ENCODE measurements at regions of chr12 and their contacts with region 1.

Region 1: DNA sequence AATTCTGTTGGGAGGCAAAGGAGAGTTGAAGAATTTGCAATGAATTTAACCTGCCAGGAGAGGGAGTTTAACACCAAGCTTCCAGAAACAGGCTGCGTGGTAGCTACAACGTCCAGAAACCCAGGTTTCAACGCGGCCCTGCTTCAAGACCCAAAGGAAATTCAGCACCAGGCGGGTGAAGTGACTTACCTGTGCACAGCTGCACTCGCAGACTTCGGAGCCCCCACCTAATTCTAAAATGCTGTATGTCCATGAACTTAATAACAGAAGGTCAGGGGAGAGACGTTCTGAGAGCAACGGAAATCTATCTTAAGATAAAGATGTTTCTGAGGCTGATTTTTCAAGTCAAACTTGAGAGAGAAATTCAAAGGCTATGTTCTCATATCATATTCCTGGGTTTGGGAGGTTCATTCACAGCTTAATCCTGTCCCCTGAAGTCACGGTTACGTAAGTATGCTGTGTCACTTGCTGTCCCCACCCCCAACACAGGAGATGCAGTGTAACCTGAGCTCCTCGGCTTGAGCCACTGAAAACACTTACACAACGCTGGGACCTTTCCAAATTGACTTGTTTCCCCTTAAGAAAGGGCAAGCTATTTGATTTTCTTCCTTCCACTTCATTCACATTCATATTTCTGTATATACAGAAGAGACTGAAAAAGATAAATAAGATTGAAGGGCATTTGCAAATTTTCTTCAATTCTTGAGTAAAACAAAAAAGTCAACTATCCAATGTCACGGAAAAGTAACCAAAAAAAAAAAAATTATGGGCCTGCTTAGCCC is 22.7 kb downstream of the CLIP1 start:
- DNase-seq: peak; percentile 71
- H3K4me3 Mint-ChIP-seq: peak overlapping the region; percentile 41
- H3K27ac Mint-ChIP-seq: peak overlapping the region; percentile 85
- H3K4me1 Mint-ChIP-seq: peaks cover 48% of the 10 kb centered on the region
- H3K27me3 Mint-ChIP-seq: no peaks in the 10 kb centered on the region

Region 2: DNA sequence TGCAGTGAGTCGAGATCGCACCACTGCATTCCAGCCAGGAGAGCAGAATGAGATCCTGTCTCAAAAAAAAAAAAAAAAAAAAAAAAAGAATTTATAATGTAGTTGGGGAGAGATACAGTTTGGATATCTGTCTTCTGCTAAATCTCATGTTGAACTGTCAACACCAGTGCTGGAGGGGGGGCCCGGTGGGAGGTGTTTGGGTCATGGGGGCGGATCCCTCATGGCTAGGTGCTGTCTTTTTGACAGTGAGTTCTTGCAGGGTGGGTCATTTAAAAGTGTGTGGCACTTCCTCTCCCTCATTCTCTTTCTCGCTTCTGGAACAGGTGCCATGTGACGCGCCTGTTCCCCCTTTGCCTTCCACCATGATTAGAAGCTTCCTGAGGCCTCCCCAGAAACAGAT is 10.1 kb before region 1 on chr12:
- CTCF ChIA-PET with region 1: interaction called, 14 read pairs
- POLR2A ChIA-PET with region 1: no interaction called
- DNase-seq: no peak
- H3K4me3 Mint-ChIP-seq: no peak overlapping the region
- H3K27ac Mint-ChIP-seq: no peak overlapping the region
- H3K4me1 Mint-ChIP-seq: peaks cover 15% of the 10 kb centered on the region
- H3K27me3 Mint-ChIP-seq: no peaks in the 10 kb centered on the region

Region 3: GRCh38 chr12:122413516-122414404 is 14.0 kb after region 1 on chr12:
- CTCF ChIA-PET with region 1: interaction called, 33 read pairs
- POLR2A ChIA-PET with region 1: interaction called, 3 read pairs
- DNase-seq: no peak
- H3K4me3 Mint-ChIP-seq: no peak overlapping the region
- H3K27ac Mint-ChIP-seq: peak overlapping the region; percentile 89
- H3K4me1 Mint-ChIP-seq: peaks cover 28% of the 10 kb centered on the region
- H3K27me3 Mint-ChIP-seq: no peaks in the 10 kb centered on the region

Measured in activated CD4-positive, alpha-beta T cell treated with anti-CD3 and anti-CD28 coated beads, Interleukin-2, amount 10 ng/mL, durations not matched to agents 7 days and 5 days (primary cell).